AG04449 (cell line): ENCODE measurements at regions of chr5 and their contacts with region 1.

Region 1: GRCh38 chr5:154467655-154468354 is 10.2 kb downstream of the HAND1 start:
- DNase-seq: no peak
- H3K4me3 ChIP-seq: no peak overlapping the region
- CTCF ChIP-seq: peak; percentile 92

Region 2: DNA sequence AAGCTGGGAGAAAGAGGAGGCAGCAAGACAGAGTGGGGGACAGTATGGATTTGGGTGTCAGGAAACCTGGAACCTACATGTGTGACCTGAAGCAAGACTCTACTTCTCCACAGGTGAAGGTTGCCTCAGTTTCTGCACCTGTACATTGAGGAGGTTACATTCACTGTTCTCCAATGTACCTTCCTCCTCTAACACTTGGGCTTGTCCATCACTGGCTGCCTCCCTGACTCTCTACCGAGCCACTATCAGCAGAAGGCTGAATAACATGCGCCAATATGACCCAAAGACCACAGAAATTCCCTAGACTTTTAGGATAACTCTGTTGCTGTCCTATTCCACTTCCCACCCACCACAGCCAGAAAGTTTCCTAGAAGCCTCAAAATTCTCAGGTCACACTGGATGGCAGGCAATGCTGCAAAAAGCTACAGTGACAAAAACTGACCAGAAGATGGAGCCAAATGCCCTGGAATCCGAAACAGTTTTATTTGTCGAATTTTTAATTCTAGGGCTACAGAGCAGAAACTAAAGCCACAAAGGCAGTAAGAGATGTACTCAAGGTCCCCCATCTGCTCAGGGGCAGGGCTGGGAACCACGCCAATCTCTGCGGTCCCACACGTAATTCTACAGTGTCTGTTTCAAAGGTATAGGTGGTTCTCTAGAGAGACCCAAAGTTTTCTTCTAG is 493.5 kb before region 1 on chr5:
- CTCF ChIA-PET with region 1: interaction called, 12 read pairs
- POLR2A ChIA-PET with region 1: no interaction called
- DNase-seq: no peak
- H3K4me3 ChIP-seq: no peak overlapping the region
- CTCF ChIP-seq: peak; percentile 63

Region 3: GRCh38 chr5:154445422-154446182 is 22.2 kb before region 1 on chr5 and contains the start of gene SAP30L:
- CTCF ChIA-PET with region 1: interaction called, 44 read pairs
- POLR2A ChIA-PET with region 1: no interaction called
- DNase-seq: peak; percentile 52
- H3K4me3 ChIP-seq: peak within 1 kb of the TSS; percentile 95
- CTCF ChIP-seq: no peak

Region 4: GRCh38 chr5:154478224-154478565 is 10.4 kb after region 1 on chr5 and contains the start of gene HAND1:
- CTCF ChIA-PET with region 1: interaction called, 31 read pairs
- POLR2A ChIA-PET with region 1: no interaction called
- DNase-seq: no peak
- H3K4me3 ChIP-seq: peak within 1 kb of the TSS; percentile 40
- CTCF ChIP-seq: no peak

Region 5: DNA sequence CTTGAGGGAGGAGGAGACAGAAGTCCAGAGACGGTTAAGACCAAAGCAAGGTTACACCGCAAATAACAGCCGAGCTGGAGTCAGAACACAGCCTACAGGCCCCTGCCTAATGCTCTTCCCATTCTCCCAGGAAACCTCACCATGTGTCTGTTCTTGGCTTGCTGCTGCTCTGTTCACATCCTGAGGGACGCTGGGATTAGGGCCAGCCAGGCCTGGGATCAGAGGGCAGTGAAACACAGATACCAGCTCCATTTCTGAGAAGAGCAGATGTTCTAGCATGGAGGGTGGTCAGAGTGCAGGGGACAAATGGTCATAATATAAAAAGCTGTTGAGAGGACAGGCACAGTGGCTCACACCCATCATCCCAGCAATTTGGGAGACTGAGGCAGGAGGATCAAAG is 162.6 kb after region 1 on chr5:
- CTCF ChIA-PET with region 1: interaction called, 18 read pairs
- POLR2A ChIA-PET with region 1: no interaction called
- DNase-seq: no peak
- H3K4me3 ChIP-seq: no peak overlapping the region
- CTCF ChIP-seq: no peak